SK-N-SH (cell line): ENCODE measurements at regions of chr16 and their contacts with region 1.

Region 1: GRCh38 chr16:9134739-9135138 is 43.3 kb downstream of the HAPSTR1 start:
- DNase-seq: peak; percentile 82
- H3K4me3 ChIP-seq: no peak overlapping the region
- H3K27ac ChIP-seq: no peak overlapping the region
- H3K4me1 ChIP-seq: peaks cover 0 to 10% of the 10 kb centered on the region in 2 experiments; a peak in 2 of 4 replicates
- H3K27me3 ChIP-seq: no peaks in the 10 kb centered on the region
- CTCF ChIP-seq: peak; percentile 72
- EP300 ChIP-seq: no peak
- RAD21 ChIP-seq: peak; percentile 87

Region 2: DNA sequence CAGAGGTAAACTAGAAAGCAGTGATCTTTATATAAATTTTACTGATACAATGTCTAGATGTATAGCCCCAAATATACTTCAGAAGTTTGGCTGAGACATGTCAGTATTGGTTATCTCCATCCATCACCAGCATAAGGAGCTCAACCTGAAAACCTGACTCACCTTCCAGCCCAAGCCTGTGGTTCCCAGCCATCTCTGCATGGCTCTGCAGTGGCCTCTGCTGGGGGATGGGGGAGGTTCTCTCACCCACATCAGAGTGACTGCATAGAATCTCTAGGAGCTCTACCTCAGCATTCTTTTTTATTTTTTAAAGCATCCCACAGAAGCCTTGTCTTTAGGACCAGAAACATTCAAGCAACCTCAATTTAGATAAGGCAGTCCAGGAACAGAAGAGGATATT is 198.3 kb before region 1 on chr16:
- CTCF ChIA-PET with region 1: interaction called, 13 read pairs
- POLR2A ChIA-PET with region 1: no interaction called
- DNase-seq: peak; percentile 68
- H3K4me3 ChIP-seq: no peak overlapping the region; a peak in 1 of 4 replicates
- H3K27ac ChIP-seq: no peak overlapping the region
- H3K4me1 ChIP-seq: peaks cover 0 to 7% of the 10 kb centered on the region in 2 experiments; a peak in 1 of 4 replicates
- H3K27me3 ChIP-seq: no peaks in the 10 kb centered on the region
- CTCF ChIP-seq: peak; percentile 54
- EP300 ChIP-seq: no peak
- RAD21 ChIP-seq: peak; percentile 54

Region 3: DNA sequence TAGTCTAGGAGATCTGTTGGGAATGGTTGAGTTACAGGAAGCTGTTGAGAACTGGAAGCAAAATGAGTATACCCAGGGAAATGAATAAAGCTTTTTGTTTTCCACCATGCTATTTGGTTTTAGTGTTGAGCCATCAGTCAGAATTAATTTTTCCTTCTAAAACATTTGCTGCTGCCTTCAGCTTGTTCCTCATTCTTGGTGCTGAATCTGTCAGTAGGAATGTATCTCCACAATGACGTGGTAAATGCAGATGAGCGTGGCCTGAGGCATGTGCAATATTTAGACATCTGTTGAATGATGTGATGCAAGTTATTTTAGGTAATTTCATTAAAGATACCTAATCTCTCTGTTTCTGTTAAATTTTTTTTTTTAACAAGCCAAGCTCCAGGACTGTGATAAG is 32.4 kb before region 1 on chr16:
- CTCF ChIA-PET with region 1: interaction called, 17 read pairs
- POLR2A ChIA-PET with region 1: no interaction called
- DNase-seq: no peak
- H3K4me3 ChIP-seq: no peak overlapping the region
- H3K27ac ChIP-seq: peak overlapping the region in 1 of 2 experiments; percentile 67; a peak in 2 of 4 replicates
- H3K4me1 ChIP-seq: peaks cover 7 to 34% of the 10 kb centered on the region in 2 experiments
- H3K27me3 ChIP-seq: no peaks in the 10 kb centered on the region
- CTCF ChIP-seq: no peak
- EP300 ChIP-seq: peak in 1 of 2 experiments; percentile 10; a peak in 1 of 4 replicates
- RAD21 ChIP-seq: no peak

Region 4: GRCh38 chr16:9123871-9124270 is 10.9 kb before region 1 on chr16:
- CTCF ChIA-PET with region 1: interaction called, 27 read pairs
- POLR2A ChIA-PET with region 1: no interaction called
- DNase-seq: no peak
- H3K4me3 ChIP-seq: no peak overlapping the region
- H3K27ac ChIP-seq: no peak overlapping the region
- H3K4me1 ChIP-seq: peaks cover 22 to 40% of the 10 kb centered on the region in 2 experiments
- H3K27me3 ChIP-seq: no peaks in the 10 kb centered on the region
- CTCF ChIP-seq: no peak
- EP300 ChIP-seq: no peak
- RAD21 ChIP-seq: no peak

Region 5: DNA sequence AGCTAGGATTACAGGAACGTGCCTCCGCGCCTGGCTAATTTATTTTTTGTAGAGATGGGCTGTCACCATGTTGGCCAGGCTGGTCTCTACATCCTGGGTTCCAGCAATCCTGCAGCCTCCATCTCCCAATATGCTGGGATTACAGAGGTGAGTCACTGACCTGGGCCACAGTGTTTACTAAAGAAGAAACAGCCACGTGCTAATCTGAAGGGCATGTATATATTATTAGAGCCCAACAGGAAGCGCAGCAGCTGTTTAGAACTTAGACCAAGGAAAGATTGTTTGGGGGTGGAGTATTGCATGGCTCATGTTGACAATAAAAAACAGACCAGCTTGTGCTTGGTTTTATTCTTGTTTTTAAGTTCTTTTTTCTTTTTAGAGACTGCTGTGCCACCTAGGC is 16.9 kb after region 1 on chr16:
- CTCF ChIA-PET with region 1: interaction called, 30 read pairs
- POLR2A ChIA-PET with region 1: no interaction called
- DNase-seq: no peak
- H3K4me3 ChIP-seq: no peak overlapping the region
- H3K27ac ChIP-seq: no peak overlapping the region
- H3K4me1 ChIP-seq: no peaks in the 10 kb centered on the region
- H3K27me3 ChIP-seq: no peaks in the 10 kb centered on the region
- CTCF ChIP-seq: no peak
- EP300 ChIP-seq: no peak
- RAD21 ChIP-seq: no peak